ENCODE measurements at regions of chr17 and their contacts with region 1.

Region 1: GRCh38 chr17:43778337-43779144 is at the start of gene DUSP3:
- DNase-seq: peak; percentile 97
- total RNA-seq, gene DUSP3: 224 TPM

Region 2: GRCh38 chr17:43483674-43484372 is 294.7 kb before region 1 on chr17 and contains the start of gene DHX8:
- intact Hi-C with region 1: no loop called
- DNase-seq: peak; percentile 99
- total RNA-seq, gene DHX8: 32.7 TPM

Region 3: DNA sequence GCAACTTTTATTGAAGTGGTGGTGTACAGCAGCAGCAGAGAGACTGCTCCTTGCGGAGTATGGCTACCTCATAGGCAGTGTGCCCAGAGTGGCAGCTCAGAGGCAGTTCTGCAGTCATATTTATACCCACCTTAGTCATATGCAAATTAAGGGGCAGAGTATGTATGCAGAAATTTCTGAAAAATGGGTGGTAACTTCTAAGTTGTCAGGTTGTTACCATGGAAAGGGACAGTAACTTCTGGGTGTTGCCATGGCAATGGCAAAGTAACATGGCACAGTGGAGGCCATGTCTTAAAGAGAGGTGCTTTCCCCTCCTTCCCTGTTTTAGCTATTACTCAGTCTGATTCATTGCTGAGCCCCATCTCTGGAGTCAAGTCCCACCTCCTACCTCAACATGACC is 170.2 kb before region 1 on chr17:
- intact Hi-C with region 1: no loop called
- DNase-seq: no peak

Region 4: GRCh38 chr17:43832976-43833829 is 54.7 kb after region 1 on chr17 and contains the start of gene MPP3:
- intact Hi-C with region 1: loop called (anchors 5 kb)
- DNase-seq: no peak
- total RNA-seq, gene MPP3: 20.0 TPM

Region 5: DNA sequence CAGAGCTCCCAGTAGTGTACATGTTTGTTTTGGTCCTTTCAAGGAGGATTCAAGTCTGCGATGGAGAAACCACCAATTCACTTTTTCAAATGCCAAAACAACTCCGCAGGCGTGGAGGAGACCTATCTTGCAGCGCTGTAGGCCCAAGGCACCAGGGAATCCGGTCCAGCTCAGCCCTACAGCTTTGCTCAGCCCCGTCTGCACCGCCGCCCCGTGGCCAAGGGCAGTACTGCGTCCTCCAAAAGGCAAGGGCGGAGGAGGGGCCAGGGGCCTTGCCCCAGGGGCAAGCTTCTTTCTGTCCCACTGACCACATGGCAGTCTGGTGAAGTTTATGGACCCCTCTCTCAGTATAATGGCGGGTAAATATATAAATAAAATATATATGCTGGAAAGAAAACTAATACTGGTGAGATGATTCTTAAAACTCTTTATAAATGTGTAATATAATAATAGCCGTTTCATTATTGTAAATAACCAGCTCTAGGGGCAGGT is 67.7 kb after region 1 on chr17:
- intact Hi-C with region 1: loop called (anchors 5 kb)
- DNase-seq: peak; percentile 91

Region 6: GRCh38 chr17:43871951-43872695 is 93.6 kb after region 1 on chr17:
- intact Hi-C with region 1: no loop called
- DNase-seq: no peak

Region 7: DNA sequence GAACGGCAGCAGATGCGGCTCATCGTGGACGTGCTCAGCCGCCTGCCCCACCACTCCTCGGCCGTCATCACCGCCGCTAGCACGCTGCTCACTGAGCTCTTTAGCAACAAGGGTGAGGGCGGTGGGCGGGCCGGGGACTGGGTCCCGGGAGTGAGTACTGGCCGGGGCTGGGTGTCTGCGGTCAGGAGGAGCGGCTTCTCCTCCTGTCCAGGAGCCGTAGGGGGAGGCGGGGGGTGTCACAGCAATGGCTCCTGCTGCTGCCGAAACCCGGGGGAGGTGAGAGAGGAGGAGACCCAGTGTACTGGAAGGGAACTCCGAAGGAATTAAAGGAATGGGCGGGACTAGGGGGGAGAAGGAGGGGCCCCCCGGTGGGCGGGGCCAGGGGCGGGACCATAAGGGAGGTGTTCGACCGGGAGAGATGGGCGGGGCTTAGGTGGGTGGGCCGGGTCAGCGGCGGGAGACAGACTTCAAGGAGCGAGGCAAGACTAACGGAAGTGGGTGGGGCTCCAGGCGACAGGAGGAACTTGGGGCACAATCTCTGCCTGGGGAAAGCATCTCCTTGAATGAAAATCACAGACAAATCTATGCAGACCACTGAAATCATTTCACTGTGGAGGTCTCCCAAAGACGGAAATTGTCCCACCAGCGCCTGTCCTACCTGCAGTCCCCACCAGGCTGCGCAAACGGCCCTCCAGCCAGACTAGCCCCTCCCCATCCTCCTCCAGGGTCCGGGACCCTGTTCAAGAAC is 228.2 kb after region 1 on chr17:
- intact Hi-C with region 1: no loop called
- DNase-seq: peak; percentile 98

Measured in cardiac septum (tissue), 1 donor.